CD8-positive, alpha-beta T cell (primary cell): ENCODE measurements at regions of chr17 and their contacts with region 1.

Region 1: DNA sequence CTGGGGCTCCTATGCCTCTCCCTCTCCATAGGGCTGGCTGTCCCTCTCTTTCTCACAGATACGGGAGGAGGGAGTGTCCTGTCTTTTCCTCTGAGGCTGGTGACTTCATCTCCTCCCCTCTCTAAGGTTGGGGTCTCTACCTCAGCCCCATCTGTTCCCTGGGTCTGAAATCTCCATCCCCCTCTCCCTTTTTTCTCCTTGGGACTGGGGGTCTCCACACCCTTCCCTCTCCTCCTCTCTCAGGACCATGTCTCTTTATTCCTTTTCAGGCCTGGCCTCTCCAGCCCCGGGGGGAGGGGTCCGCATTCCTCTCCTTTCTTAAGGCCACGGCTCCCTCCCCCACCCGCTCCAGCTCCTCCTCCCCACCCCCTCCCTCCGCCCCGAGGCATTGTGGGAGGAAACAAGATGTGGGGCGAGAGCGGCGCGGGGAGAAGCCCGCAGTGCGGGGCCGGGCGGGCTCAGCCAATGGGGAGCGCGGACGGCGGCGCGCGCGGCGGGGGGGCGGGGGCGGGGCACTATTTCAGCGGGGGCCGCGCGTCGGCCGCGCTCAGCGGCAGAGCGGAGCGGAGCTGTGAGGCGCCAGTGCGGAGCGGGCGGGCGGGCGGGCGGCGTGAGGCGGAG is at the start of gene DYNLL2:
- DNase-seq: peak; percentile 76 to 93 (median 88)
- ATAC-seq: peak; percentile 69
- H3K4me3 ChIP-seq: peak within 1 kb of the TSS; percentile 60 to 62
- H3K4me3 Mint-ChIP-seq: peak within 1 kb of the TSS; percentile 89
- H3K27ac ChIP-seq: peak within 1 kb of the TSS; percentile 81 to 85
- H3K27ac Mint-ChIP-seq: peak within 1 kb of the TSS; percentile 88
- H3K4me1 ChIP-seq: peaks cover 33% of the 10 kb centered on the region
- H3K4me1 Mint-ChIP-seq: peaks cover 33% of the 10 kb centered on the region
- H3K27me3 ChIP-seq: no peaks in the 10 kb centered on the region
- H3K27me3 Mint-ChIP-seq: no peaks in the 10 kb centered on the region
- CTCF ChIP-seq: no peak
- total RNA-seq, gene DYNLL2: 30.5 to 30.6 TPM

Region 2: DNA sequence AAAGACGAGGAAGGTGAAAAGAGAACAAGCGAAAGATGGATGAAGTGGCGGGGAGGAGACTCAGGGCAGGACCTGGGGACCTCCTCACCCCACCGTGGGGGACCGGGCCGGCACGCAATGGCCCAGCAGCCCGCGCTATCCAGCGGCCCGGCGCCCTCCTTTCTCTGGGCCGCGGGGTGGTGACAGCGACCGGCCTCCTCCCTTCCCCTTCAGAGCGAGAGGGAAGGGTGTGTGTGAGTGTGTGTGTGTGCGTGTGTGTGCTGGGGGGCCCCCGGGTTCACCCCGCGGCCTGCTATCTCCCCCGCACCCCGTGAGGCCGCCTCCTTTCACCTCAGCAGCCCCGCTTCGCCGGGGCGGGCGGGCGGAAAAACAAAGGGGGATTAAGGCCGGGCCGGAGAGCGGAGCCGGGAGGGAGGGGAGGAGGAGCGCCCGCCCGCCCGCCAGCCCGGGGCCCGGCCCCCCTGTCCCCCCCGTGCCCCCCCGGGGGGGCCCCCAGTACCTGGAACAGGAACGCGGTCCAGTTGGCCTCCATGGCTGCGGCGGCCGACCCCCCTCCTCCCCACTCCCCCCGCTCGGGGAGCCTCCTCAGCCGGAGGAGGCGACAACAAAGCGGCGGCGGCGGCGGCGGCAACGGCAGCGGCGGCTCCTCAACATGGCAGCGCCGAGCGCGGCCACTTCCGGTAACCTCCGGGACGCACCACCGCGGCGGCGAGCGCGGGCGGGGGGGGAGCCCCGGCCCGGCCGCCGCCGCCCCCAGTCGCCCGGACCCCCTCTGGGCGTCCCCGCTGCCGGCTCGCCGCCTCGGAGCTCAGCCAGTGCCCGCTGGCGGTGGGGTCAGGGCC is 95.2 kb before region 1 on chr17 and contains the start of gene VEZF1:
- CTCF ChIA-PET with region 1: interaction called, 4 read pairs
- POLR2A ChIA-PET with region 1: no interaction called
- intact Hi-C with region 1: loop called in 1 of 2 experiments (anchors 5 kb)
- DNase-seq: peak; percentile 53 to 91 (median 79)
- ATAC-seq: peak; percentile 67
- H3K4me3 ChIP-seq: peak within 1 kb of the TSS; percentile 83 to 90
- H3K4me3 Mint-ChIP-seq: peak within 1 kb of the TSS; percentile 94
- H3K27ac ChIP-seq: peak within 1 kb of the TSS; percentile 57 to 72
- H3K27ac Mint-ChIP-seq: peak within 1 kb of the TSS; percentile 93
- H3K4me1 ChIP-seq: peaks cover 49% of the 10 kb centered on the region
- H3K4me1 Mint-ChIP-seq: peaks cover 63% of the 10 kb centered on the region
- H3K27me3 ChIP-seq: no peaks in the 10 kb centered on the region
- H3K27me3 Mint-ChIP-seq: no peaks in the 10 kb centered on the region
- CTCF ChIP-seq: no peak
- total RNA-seq, gene VEZF1: 45.2 to 46.6 TPM

Region 3: DNA sequence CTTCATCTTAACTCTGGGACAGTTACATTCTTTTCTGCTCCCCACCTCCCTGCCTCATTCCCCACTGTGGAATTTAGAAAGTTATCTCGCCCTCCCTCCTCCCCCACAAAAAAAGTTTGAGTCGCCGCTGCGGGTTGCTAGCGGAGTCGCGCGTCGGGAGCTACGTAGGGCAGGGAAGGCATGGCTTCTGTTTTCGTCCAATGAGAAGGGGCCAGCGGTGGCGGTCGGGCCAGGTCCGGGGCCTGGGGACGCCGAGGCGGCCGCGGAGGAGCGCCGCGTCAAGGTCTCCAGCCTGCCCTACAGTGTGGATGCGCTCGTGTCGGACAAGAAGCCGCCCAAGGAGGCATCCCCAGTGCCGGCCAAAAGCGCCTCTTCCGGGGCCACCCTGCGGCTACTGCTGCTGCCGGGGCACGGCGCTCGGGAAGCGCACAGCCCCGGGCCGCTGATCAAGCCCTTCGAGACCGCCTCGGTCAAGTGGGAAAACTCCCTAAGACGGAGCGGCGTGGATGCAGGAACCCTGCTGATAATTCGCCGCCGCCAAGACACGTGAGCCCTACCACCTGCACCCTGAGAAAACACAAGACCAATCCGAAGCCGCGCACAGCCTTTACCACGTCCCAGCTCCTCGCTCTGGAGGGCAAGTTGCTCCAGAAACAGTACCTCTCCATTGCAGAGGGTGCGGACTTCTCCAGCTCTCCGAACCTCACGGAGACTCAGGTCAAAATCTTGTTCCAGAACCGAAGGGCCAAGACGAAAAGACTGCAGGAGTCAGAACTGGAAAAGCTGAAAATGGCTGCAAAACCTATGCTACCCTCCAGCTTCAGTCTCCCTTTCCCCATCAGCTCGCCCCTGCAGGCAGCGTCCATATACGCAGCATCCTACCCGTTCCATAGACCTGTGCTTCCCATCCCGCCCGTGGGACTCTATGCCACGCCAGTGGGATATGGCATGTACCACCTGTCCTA is 74.1 kb after region 1 on chr17:
- CTCF ChIA-PET with region 1: no interaction called
- POLR2A ChIA-PET with region 1: no interaction called
- intact Hi-C with region 1: no loop called
- DNase-seq: peak; percentile 19 to 81 (median 56)
- ATAC-seq: peak; percentile 54
- H3K4me3 ChIP-seq: peak overlapping the region; percentile 73 to 79
- H3K4me3 Mint-ChIP-seq: peak overlapping the region; percentile 85
- H3K27ac ChIP-seq: peak overlapping the region; percentile 84 to 92
- H3K27ac Mint-ChIP-seq: peak overlapping the region; percentile 87
- H3K4me1 ChIP-seq: peaks cover 60% of the 10 kb centered on the region
- H3K4me1 Mint-ChIP-seq: peaks cover 69% of the 10 kb centered on the region
- H3K27me3 ChIP-seq: no peaks in the 10 kb centered on the region
- H3K27me3 Mint-ChIP-seq: no peaks in the 10 kb centered on the region
- CTCF ChIP-seq: no peak